Testis (tissue), 5 donors: ENCODE measurements at regions of chr3 and their contacts with region 1.

Region 1: GRCh38 chr3:159804726-159805410 is 183.8 kb upstream of the IL12A start:
- DNase-seq: peak; percentile 80
- H3K4me3 ChIP-seq: no peak overlapping the region
- H3K27ac ChIP-seq: no peak overlapping the region
- H3K4me1 ChIP-seq: peaks cover 6% of the 10 kb centered on the region
- H3K27me3 ChIP-seq: no peaks in the 10 kb centered on the region
- CTCF ChIP-seq: peak; percentile 32 to 70 (median 69)
- POLR2A ChIP-seq: no peak

Region 2: GRCh38 chr3:159616212-159616825 is 188.5 kb before region 1 on chr3:
- intact Hi-C with region 1: loop called (anchors 10 kb)
- DNase-seq: peak; percentile 37
- H3K4me3 ChIP-seq: no peak overlapping the region
- H3K27ac ChIP-seq: no peak overlapping the region
- H3K4me1 ChIP-seq: no peaks in the 10 kb centered on the region
- H3K27me3 ChIP-seq: no peaks in the 10 kb centered on the region
- CTCF ChIP-seq: peak; percentile 20 to 48 (median 41)
- POLR2A ChIP-seq: no peak